ENCODE measurements at regions of chr2 and their contacts with region 1.

Region 1: DNA sequence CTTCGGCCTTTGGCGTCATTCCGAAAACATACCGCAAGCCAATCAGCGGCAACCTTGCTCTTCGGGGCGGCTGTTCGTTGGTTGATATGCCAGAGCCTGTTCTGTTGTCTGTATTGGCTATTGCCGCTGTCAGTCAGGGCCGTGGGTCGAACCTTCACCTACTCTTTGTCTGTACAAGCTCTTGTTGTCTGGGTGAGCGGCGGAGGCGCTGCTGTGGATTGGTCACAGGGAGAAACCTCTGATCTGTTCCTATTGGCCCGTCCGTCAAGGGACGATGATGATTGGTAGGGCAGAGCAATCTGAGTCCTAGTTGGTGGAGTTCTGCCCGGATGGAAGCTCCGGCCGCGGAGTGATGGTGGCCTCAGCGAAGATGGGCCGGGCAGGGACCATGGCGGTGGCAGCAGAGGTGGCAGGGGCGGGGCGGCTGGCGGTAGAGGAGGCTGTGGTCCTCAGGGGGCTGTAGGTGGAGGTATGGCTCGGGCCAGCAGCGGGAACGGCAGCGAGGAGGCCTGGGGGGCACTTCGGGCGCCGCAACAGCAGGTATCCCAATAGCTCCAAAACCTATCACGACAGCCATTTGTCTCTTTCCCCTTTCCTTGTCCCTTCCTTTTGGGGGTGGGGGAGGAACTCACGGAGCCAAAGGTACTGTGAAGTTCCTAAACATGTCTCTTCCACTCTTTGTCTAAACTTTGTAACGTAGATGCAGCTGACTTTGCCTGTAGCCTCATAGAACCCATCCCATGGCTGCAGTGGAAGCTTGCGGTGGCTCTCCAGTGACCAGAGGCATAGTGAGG is at the start of gene WBP1:
- DNase-seq: peak; percentile 100
- H3K4me3 ChIP-seq: peak within 1 kb of the TSS; percentile 72 to 78
- H3K27ac ChIP-seq: peak within 1 kb of the TSS; percentile 91 to 94
- H3K4me1 ChIP-seq: peaks cover 7 to 31% of the 10 kb centered on the region in 2 donors
- H3K27me3 ChIP-seq: no peaks in the 10 kb centered on the region
- CTCF ChIP-seq: no peak
- total RNA-seq, gene WBP1: 18.1 TPM

Region 2: DNA sequence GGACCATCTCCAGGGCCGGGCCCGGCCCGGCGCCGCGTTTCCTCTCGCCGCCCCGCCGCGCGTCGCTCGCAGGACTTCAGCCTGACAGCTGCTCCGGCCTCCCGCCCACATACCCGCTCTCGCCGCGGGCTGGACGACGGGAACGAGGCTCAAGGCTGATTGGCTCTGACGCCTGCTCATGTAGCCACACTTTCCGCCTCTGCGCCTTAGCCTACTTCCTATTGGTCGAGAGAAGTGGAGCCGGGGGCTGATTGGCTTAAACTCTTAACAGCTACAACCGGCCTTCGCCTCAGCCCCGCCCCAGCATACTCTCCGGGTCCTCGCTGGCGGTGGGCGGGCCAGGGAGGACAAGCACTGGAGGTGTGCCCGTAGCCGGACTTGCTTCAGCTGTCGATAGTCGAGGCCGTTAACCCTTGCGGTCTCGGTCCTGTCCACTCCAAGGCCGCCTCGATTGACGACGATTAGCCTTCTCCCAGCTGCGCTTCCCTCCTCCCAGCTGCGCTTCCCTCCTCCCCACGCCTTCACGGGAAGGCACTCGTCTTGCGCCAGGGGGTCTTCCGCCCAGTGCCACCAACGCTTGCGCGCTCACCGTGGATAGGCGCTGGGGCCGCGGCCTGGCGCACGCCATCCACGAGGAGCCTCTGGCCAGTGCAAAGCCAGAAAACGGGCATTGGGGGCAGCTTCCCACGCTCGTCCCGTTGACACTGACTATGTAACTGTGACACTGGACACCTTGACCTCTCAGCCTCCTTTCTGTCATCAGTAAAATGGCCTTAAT is 1225.0 kb before region 1 on chr2 and contains the start of gene PRADC1:
- intact Hi-C with region 1: loop called (anchors 5 kb)
- DNase-seq: peak; percentile 98 to 100
- H3K4me3 ChIP-seq: peak within 1 kb of the TSS; percentile 82 to 85
- H3K27ac ChIP-seq: peak within 1 kb of the TSS; percentile 93 to 96
- H3K4me1 ChIP-seq: peaks cover 4 to 5% of the 10 kb centered on the region in 2 donors
- H3K27me3 ChIP-seq: no peaks in the 10 kb centered on the region
- CTCF ChIP-seq: no peak
- total RNA-seq, gene PRADC1: 77.0 TPM

Region 3: DNA sequence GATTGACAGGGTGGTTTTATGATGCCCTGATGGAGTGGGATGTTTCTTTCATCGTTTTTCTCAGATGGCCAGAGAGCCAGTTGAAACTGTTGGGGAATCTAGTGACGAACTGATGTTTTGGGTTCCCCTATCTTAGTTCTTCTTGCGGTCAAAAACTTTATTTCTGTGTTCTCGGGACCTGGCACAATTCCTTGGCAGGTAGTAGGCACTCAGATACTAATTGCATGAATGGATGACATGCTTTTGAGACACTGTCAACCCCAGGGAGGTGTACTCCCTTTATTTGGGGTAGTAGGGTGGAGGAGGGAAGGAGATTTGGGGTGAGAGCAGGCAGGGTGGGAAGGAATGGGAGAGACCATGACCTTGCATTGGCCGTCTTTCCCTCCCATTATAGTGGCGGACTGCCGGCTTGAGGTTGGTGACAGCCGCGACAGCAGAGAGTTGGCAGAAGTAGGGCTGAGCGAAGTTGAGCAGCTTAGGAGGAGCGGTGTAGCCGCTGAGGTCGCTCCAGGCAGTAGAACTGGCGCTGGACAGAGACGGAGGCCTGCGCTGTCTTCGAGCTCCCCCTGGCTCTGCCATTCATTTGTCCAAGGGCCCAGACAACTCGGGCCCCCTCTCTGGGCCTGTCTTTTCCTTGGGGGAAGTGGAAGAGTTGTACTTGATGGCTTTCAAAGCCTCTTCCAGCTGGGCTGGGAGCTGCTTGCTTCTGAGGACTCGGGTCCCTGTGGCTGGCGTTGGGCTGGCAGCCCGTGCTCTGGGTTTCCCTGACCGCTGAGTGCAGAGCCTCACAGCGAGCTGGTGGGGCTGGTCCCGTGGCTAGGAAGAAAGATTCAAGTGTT is 471.0 kb before region 1 on chr2:
- intact Hi-C with region 1: no loop called
- DNase-seq: no peak
- H3K4me3 ChIP-seq: peak overlapping the region; percentile 7 to 43
- H3K27ac ChIP-seq: no peak overlapping the region
- H3K4me1 ChIP-seq: peaks cover 6 to 25% of the 10 kb centered on the region in 2 donors
- H3K27me3 ChIP-seq: no peaks in the 10 kb centered on the region
- CTCF ChIP-seq: peak in 1 of 3 experiments; percentile 58

Region 4: DNA sequence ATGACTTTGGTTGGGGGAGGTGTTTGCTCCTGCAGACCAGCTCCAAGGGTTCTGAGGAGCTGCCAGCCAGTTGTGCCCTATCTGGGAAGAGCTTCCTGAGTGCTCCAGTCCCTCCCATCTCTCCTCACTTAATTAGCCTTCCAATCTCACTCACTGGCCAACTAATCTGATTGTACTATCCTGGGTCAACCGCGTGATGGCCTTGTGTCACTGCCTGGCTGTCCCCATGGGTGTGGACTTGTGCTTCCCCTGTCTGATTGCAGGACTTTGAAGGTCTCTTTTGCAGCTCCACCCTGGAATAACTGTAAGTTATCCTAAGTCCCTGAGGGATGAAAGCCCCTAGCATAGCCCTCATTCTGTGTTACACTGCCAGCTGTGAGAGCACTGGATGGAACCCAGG is 180.2 kb before region 1 on chr2:
- intact Hi-C with region 1: no loop called
- DNase-seq: no peak
- H3K4me3 ChIP-seq: no peak overlapping the region
- H3K27ac ChIP-seq: no peak overlapping the region
- H3K4me1 ChIP-seq: no peaks in the 10 kb centered on the region
- H3K27me3 ChIP-seq: no peaks in the 10 kb centered on the region
- CTCF ChIP-seq: no peak

Region 5: DNA sequence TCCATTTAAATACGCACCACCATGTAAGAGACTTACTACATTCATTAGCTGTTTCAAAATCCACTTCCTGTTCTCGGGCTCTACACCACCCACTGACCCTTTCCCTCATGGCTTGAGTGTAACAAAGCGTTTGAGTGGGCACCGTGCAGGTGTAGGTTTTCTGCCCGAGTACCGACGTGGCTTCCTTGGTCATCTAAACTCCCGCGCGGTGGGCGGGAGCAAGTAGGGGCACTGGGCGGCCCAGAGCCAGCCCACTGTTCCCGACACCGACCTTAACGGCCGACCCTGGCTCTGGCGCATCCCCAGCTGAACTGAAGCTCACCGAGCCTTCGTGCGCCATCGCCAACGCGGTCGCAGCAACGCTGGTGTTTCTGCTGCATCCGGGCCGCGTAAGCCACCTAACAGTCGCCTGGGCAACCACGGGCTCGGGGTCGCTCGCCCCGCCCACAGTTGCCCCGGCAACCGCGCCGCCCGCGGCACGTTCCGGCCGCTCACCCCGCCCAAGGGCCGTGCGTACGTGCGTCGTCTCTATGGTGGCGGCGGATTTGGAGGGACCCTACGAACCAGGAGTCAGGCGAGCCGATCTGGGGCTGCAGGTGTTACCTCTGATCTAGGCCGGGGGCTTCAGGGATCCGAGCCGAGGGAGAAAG is 37.0 kb before region 1 on chr2 and contains the starts of genes C2orf81 and WDR54:
- intact Hi-C with region 1: loop called (anchors 1 kb)
- DNase-seq: peak; percentile 53 to 93
- H3K4me3 ChIP-seq: peak within 1 kb of the TSS; percentile 64 to 85
- H3K27ac ChIP-seq: peak within 1 kb of the TSS; percentile 32 to 63
- H3K4me1 ChIP-seq: peaks cover 3 to 5% of the 10 kb centered on the region in 2 donors
- H3K27me3 ChIP-seq: no peaks in the 10 kb centered on the region
- CTCF ChIP-seq: no peak
- total RNA-seq, gene C2orf81: 10.3 TPM
- total RNA-seq, gene WDR54: 5.5 TPM

Region 6: DNA sequence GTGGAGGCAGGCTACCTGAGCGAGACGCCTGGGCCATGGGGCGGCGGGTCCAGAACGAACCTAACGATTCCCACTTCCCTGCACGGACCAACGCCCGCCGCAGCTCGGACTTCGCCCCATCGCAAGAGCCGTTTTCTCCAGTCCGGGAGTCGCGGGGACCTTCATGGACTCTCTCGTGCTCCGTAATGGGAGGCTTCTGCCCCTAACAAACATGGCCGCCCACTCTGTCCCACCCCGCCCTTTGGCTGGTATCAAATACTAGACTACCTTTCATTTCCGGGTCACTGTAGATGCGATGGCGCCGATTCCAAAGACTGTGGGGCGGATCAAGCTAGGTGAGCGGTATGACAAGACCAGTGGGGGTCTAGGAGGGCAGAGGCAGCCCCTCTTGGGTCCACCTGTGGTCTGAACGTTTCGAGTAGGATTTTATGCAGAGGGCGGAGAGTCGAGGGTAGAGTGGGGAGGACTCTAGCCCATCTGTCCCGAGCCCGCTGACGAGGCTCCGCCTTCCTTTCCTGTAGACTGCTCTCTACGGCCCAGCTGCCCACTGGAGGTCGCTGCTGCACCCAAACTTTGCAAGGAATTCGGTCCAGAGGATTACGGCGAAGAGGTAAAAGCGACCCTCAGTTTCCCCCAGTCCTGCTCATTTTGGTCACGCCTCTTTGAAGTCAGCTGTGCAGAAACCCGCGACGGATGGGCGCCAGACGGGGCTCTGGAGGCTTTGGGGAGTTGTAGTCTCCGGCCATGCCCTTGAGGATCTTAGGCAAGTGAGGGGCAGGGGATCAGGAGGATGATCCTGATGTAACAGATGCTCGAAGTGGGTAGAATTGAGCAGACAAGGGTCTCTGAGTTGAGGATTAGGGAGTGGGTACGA is 24.7 kb after region 1 on chr2 and contains the starts of genes CCDC142 and TTC31:
- intact Hi-C with region 1: loop called (anchors 1 kb)
- DNase-seq: peak; percentile 92 to 99
- H3K4me3 ChIP-seq: peak within 1 kb of the TSS; percentile 80 to 85
- H3K27ac ChIP-seq: peak within 1 kb of the TSS; percentile 85 to 90
- H3K4me1 ChIP-seq: peaks cover 9 to 21% of the 10 kb centered on the region in 2 donors
- H3K27me3 ChIP-seq: no peaks in the 10 kb centered on the region
- CTCF ChIP-seq: peak; percentile 83 to 91 (median 86)
- total RNA-seq, gene CCDC142: 16.5 TPM
- total RNA-seq, gene TTC31: 19.5 TPM

Region 7: GRCh38 chr2:74500578-74500946 is 42.2 kb after region 1 on chr2:
- intact Hi-C with region 1: no loop called
- DNase-seq: no peak
- H3K4me3 ChIP-seq: no peak overlapping the region
- H3K27ac ChIP-seq: no peak overlapping the region
- H3K4me1 ChIP-seq: peaks cover 3 to 13% of the 10 kb centered on the region in 2 donors
- H3K27me3 ChIP-seq: peaks cover 5% of the 10 kb centered on the region
- CTCF ChIP-seq: no peak

Region 8: GRCh38 chr2:74529357-74530238 is 71.3 kb after region 1 on chr2 and contains the starts of genes AUP1 and HTRA2:
- intact Hi-C with region 1: loop called (anchors 2 kb)
- DNase-seq: peak; percentile 95 to 99
- H3K4me3 ChIP-seq: peak within 1 kb of the TSS; percentile 78 to 85
- H3K27ac ChIP-seq: peak within 1 kb of the TSS; percentile 84 to 88
- H3K4me1 ChIP-seq: peaks cover 13 to 21% of the 10 kb centered on the region in 2 donors
- H3K27me3 ChIP-seq: no peaks in the 10 kb centered on the region
- CTCF ChIP-seq: peak in 1 of 3 experiments; percentile 18
- total RNA-seq, gene AUP1: 120 TPM
- total RNA-seq, gene HTRA2: 80.1 TPM